ENCODE measurements at regions of chr16 and their contacts with region 1.

Region 1: GRCh38 chr16:31202414-31203375 is at the start of gene PYCARD:
- DNase-seq: peak; percentile 19
- ATAC-seq: peak; percentile 59
- H3K4me3 ChIP-seq: peak within 1 kb of the TSS; percentile 87
- H3K27ac ChIP-seq: peak within 1 kb of the TSS; percentile 13; the same call in 1 of the 2 replicates
- H3K4me1 ChIP-seq: peaks cover 4% of the 10 kb centered on the region; the same call in 1 of the 2 replicates
- H3K27me3 ChIP-seq: peaks cover 16% of the 10 kb centered on the region
- CTCF ChIP-seq: no peak
- POLR2A ChIP-seq: no peak
- RAD21 ChIP-seq: no peak; the same call in 1 of the 2 replicates
- total RNA-seq, gene PYCARD: 10.2 and 13.1 TPM in 2 replicates

Region 2: GRCh38 chr16:30805370-30806169 is 397.1 kb before region 1 on chr16:
- CTCF ChIA-PET with region 1: no interaction called
- POLR2A ChIA-PET with region 1: no interaction called
- dilution Hi-C with region 1: no loop called
- in situ Hi-C with region 1: no loop called
- intact Hi-C with region 1: no loop called
- DNase-seq: peak; percentile 74
- ATAC-seq: peak; percentile 96
- H3K4me3 ChIP-seq: peak overlapping the region; percentile 76
- H3K27ac ChIP-seq: peak overlapping the region; percentile 85
- H3K4me1 ChIP-seq: peaks cover 8% of the 10 kb centered on the region
- H3K27me3 ChIP-seq: no peaks in the 10 kb centered on the region
- CTCF ChIP-seq: no peak
- POLR2A ChIP-seq: peak; percentile 82
- RAD21 ChIP-seq: no peak

Region 3: DNA sequence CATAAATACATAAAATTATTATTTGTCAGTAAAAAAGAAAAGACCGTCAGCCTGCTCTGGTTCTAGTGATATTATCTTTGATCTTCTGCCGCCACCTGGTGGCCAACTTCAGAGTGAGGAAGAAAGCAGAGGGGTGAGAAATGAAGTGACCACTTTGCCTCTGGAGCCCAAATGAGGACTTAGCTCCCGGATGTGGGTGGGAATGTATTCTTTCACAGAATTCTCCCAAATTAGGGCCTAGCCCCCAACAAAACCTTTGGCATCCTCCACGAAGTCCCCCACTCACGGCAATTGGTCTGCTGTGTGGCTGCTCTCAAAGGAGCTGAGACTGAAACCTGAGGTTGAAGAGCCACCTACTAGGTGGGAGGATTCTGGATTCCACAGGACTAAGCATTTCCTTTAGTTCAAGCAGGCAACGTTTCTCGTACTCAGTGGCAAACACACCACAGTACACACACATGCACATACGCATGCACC is 666.0 kb after region 1 on chr16:
- CTCF ChIA-PET with region 1: no interaction called
- POLR2A ChIA-PET with region 1: interaction called, 4 read pairs
- dilution Hi-C with region 1: no loop called
- in situ Hi-C with region 1: loop called (anchors 10 kb)
- intact Hi-C with region 1: loop called (anchors 2 kb)
- DNase-seq: peak; percentile 72
- ATAC-seq: peak; percentile 79
- H3K4me3 ChIP-seq: no peak overlapping the region
- H3K27ac ChIP-seq: no peak overlapping the region
- H3K4me1 ChIP-seq: peaks cover 6% of the 10 kb centered on the region
- H3K27me3 ChIP-seq: peaks cover 12% of the 10 kb centered on the region
- CTCF ChIP-seq: peak; percentile 76
- POLR2A ChIP-seq: no peak
- RAD21 ChIP-seq: peak; percentile 74